ENCODE measurements at regions of chr1 and their contacts with region 1.

Region 1: DNA sequence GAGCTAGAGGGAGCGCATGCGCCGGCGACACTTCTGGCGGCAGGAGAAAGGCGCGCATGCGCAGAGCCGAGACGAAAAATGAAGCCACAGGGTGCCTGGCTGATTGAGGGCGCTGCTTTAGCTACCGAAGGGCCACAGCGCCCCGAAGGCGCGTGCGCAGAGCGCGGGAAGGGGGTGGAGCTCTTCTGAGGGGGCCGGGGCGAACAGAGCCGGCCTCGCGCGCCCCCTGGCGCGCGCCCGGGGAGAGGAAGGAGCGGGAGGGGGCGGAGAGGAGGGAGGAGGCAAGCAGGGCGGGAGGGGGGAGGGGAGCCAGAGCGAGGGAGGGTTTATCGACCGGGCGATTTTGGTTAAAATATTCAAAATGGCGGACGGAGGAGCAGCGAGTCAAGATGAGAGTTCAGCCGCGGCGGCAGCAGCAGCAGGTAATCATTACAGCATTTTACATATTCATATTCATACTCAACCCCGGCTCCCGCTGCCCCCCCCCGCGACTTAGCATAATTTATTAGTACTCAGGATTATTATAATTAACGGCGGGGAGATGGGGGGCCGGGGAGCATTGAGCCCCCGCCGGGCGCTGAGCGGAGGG is at the start of gene POU2F1:
- DNase-seq: peak; percentile 97
- ATAC-seq: peak; percentile 70
- H3K4me3 Mint-ChIP-seq: peak within 1 kb of the TSS; percentile 93
- H3K27ac Mint-ChIP-seq: peak within 1 kb of the TSS; percentile 89
- H3K4me1 Mint-ChIP-seq: peaks cover 37% of the 10 kb centered on the region
- H3K27me3 Mint-ChIP-seq: no peaks in the 10 kb centered on the region
- CTCF ChIP-seq: no peak
- total RNA-seq, gene POU2F1: 30.5 and 35.5 TPM in 2 replicates

Region 2: GRCh38 chr1:166838766-166839599 is 381.6 kb before region 1 on chr1 and contains the start of gene POGK:
- CTCF ChIA-PET with region 1: no interaction called
- POLR2A ChIA-PET with region 1: interaction called, 10 read pairs
- intact Hi-C with region 1: loop called (anchors 1 kb)
- DNase-seq: peak; percentile 84
- ATAC-seq: peak; percentile 94
- H3K4me3 Mint-ChIP-seq: peak within 1 kb of the TSS; percentile 92
- H3K27ac Mint-ChIP-seq: peak within 1 kb of the TSS; percentile 96
- H3K4me1 Mint-ChIP-seq: peaks cover 29% of the 10 kb centered on the region
- H3K27me3 Mint-ChIP-seq: peaks cover 2% of the 10 kb centered on the region
- CTCF ChIP-seq: no peak
- total RNA-seq, gene POGK: 37.8 and 39.1 TPM in 2 replicates

Region 3: GRCh38 chr1:167059045-167059808 is 161.4 kb before region 1 on chr1:
- CTCF ChIA-PET with region 1: interaction called, 12 read pairs
- POLR2A ChIA-PET with region 1: interaction called, 5 read pairs
- intact Hi-C with region 1: no loop called
- DNase-seq: peak; percentile 63
- ATAC-seq: peak; percentile 74
- H3K4me3 Mint-ChIP-seq: peak overlapping the region; percentile 36
- H3K27ac Mint-ChIP-seq: peak overlapping the region; percentile 54
- H3K4me1 Mint-ChIP-seq: peaks cover 4% of the 10 kb centered on the region
- H3K27me3 Mint-ChIP-seq: peaks cover 3% of the 10 kb centered on the region
- CTCF ChIP-seq: peak; percentile 98

Region 4: DNA sequence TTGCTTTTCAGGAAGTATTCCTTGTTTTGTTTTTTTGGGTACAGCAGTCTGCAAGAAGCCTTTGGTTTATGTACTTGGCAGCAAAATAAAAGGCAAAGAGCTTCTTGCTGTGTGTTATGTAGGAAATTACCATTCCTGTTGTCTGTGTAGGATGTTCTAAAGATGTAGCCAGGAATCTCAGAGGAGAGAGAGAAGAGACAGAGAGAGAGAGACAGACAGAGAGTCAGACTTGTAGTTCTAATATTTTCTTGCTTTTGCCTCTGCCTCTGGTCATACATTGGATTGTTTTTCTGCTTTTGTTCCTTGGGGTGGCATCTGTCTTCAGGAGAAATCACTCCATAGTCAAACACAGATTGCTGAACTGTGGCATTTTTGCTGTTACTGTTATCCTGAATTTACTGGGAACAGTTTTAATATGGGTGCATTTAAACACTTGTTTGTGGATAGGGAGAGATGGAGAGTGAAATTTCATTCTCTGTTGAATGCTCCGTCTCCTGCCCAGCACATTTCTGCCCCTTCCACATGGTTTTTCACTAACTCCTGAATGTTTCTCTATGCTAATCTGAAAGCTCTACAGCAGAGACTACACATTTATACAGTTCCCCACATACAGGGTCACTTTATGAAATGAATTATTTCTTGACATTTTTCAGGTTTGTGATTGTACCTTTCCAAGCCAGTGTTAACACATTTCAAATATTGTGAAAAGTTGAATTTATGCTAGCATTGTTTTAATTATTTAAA is 49.9 kb after region 1 on chr1:
- CTCF ChIA-PET with region 1: interaction called, 4 read pairs
- POLR2A ChIA-PET with region 1: interaction called, 6 read pairs
- intact Hi-C with region 1: loop called (anchors 1 kb)
- DNase-seq: no peak
- ATAC-seq: no peak
- H3K4me3 Mint-ChIP-seq: no peak overlapping the region
- H3K27ac Mint-ChIP-seq: no peak overlapping the region
- H3K4me1 Mint-ChIP-seq: peaks cover 42% of the 10 kb centered on the region
- H3K27me3 Mint-ChIP-seq: no peaks in the 10 kb centered on the region
- CTCF ChIP-seq: no peak

Region 5: GRCh38 chr1:167499664-167500101 is 279.1 kb after region 1 on chr1:
- CTCF ChIA-PET with region 1: no interaction called
- POLR2A ChIA-PET with region 1: interaction called, 14 read pairs
- intact Hi-C with region 1: loop called (anchors 1 kb)
- DNase-seq: peak; percentile 31
- ATAC-seq: peak; percentile 96
- H3K4me3 Mint-ChIP-seq: peak overlapping the region; percentile 64
- H3K27ac Mint-ChIP-seq: peak overlapping the region; percentile 59
- H3K4me1 Mint-ChIP-seq: peaks cover 38% of the 10 kb centered on the region
- H3K27me3 Mint-ChIP-seq: peaks cover 67% of the 10 kb centered on the region
- CTCF ChIP-seq: no peak

Region 6: GRCh38 chr1:167936068-167936929 is 715.7 kb after region 1 on chr1 and contains the start of gene DCAF6:
- CTCF ChIA-PET with region 1: no interaction called
- POLR2A ChIA-PET with region 1: interaction called, 16 read pairs
- intact Hi-C with region 1: loop called (anchors 1 kb)
- DNase-seq: peak; percentile 92
- ATAC-seq: peak; percentile 79
- H3K4me3 Mint-ChIP-seq: peak within 1 kb of the TSS; percentile 88
- H3K27ac Mint-ChIP-seq: peak within 1 kb of the TSS; percentile 100
- H3K4me1 Mint-ChIP-seq: peaks cover 35% of the 10 kb centered on the region
- H3K27me3 Mint-ChIP-seq: no peaks in the 10 kb centered on the region
- CTCF ChIP-seq: no peak
- total RNA-seq, gene DCAF6: 23.1 and 32.9 TPM in 2 replicates

Region 7: GRCh38 chr1:168512864-168513595 is 1292.4 kb after region 1 on chr1:
- CTCF ChIA-PET with region 1: no interaction called
- POLR2A ChIA-PET with region 1: no interaction called
- intact Hi-C with region 1: no loop called
- DNase-seq: no peak
- ATAC-seq: no peak
- H3K4me3 Mint-ChIP-seq: no peak overlapping the region
- H3K27ac Mint-ChIP-seq: no peak overlapping the region
- H3K4me1 Mint-ChIP-seq: no peaks in the 10 kb centered on the region
- H3K27me3 Mint-ChIP-seq: peaks cover 2% of the 10 kb centered on the region
- CTCF ChIP-seq: no peak